Activated T-helper 2 cell treated with anti-CD3 and anti-CD28 coated beads, Interferon-gamma antibody, Interleukin-2, Interleukin-4, amounts not matched to agents 10 μg/mL and 5 μg/mL and 100 μg/mL, durations not matched to agents 14 hours and 24 hours and 36 hours (primary cell): ENCODE measurements at regions of chr17 and their contacts with region 1.

Region 1: DNA sequence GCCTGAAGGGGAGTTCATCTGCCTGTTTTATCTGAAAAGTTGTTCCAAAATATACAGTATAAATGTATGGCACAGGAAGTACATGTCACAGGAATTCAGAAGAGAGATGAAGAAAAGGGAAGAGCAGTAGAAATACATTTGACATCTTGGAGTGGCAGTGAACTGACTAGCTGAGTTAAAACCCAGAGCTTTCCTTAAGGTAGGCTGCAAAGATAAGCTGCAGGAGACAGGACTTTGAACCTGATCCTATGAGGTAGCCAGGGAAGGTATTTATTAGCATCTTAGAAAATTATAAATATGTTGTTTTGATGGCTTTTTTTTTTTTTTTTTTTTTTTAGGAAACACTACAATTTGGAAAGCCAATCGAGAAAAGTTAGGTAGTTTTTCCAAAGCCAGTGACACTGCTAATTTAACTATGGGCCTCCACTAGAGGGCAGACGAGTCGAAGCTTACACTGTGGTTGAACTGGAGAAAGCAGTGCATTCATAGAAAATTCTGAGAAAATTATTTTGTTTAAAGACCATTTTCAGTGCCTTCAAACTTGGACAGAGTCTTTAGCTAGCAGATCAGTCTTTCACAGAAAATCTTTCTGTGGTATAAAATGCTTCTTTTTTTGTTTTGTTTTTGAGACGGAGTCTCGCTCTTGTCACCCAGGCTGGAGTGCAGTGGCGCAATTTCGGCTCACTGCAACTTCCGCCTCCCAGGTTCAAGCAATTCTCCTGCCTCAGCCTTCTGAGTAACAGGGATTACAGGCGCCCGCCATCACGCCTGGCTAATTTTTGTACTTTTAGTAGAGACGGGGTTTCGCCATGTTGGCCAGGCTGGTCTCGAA is 122.3 kb downstream of the SSH2 start:
- DNase-seq: peak; percentile 46
- H3K4me3 Mint-ChIP-seq: no peak overlapping the region
- H3K27ac Mint-ChIP-seq: no peak overlapping the region
- H3K4me1 Mint-ChIP-seq: peaks cover 14% of the 10 kb centered on the region
- H3K27me3 Mint-ChIP-seq: no peaks in the 10 kb centered on the region

Region 2: DNA sequence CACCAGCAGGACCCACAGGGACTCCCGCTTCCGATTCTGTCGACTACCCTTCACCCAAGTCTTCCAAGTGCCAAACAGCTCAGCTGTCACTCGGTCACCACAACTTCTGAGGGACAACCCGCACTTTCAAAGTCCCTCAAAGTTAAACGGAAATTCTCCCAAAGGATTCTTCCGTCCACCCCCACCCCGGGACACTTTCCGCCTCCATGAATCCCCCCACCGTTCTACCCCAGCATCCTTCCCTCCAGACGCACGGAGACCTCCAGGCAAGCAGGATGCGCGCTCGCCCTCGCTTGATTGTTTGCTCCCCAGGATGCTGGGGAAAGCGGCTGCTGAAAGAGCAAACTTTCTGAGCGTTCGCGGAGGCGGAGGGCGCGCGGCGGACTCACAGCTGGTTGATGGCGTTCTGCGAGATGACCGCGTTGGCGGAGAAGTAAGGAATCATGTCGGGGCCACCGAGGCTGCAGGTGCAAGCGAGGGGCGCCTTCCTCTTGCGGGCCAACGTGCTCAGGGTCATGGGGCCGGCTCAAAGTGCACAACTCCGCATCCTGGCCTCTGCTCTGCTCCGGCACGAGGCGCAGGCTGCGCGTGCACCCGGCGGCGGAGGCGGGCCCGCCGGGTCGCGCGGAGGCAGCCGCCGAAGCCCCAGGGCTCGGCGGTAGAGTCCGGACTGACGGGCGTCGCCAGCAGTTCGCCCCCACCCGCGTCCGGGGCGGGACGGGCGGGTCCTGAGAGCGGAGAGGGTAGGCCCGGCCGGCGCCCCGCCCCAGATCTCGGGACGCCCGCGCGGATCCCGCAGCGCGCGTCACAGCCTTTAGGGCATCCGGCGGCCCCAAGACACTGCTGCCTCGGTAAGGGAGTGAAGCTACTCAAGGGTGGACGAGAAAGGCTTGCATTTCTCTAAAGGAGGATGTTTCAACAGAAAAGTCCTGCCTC is 46.7 kb before region 1 on chr17:
- intact Hi-C with region 1: no loop called
- DNase-seq: peak; percentile 90
- H3K4me3 Mint-ChIP-seq: peak overlapping the region; percentile 97
- H3K27ac Mint-ChIP-seq: peak overlapping the region; percentile 96
- H3K4me1 Mint-ChIP-seq: peaks cover 27% of the 10 kb centered on the region
- H3K27me3 Mint-ChIP-seq: no peaks in the 10 kb centered on the region

Region 3: DNA sequence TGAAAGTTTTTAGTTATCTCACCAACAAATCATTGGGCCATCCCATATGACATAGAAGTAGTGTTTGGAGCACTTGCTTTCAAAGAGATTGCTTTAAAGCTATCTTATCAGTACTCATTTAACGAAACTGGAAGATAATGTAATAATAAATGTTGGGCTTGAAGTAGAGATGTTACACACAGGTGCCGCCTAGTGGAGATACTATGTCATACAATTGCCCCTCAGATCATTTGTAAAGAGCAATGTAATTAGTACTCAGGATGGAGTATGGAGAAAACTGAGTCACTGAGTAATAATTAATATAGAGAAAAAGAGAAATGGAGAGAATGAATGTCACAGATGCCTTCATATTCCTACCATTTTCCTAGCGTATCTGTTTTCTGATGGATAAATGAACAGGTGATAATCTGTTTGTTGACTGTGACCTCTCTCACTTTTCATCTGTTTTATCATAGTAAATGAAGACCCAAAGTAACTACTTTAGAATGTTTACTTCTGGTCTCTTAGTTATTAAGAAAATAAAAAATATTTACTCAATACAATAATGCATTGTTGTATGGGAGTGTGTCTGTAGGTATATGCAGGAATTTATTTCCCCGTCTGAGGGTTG is 214.1 kb after region 1 on chr17:
- intact Hi-C with region 1: loop called (anchors 1 kb)
- DNase-seq: no peak
- H3K4me3 Mint-ChIP-seq: no peak overlapping the region
- H3K27ac Mint-ChIP-seq: no peak overlapping the region
- H3K4me1 Mint-ChIP-seq: no peaks in the 10 kb centered on the region
- H3K27me3 Mint-ChIP-seq: peaks cover 6% of the 10 kb centered on the region

Region 4: GRCh38 chr17:30093463-30094147 is 285.9 kb after region 1 on chr17:
- intact Hi-C with region 1: loop called (anchors 5 kb)
- DNase-seq: peak; percentile 20
- H3K4me3 Mint-ChIP-seq: no peak overlapping the region
- H3K27ac Mint-ChIP-seq: no peak overlapping the region
- H3K4me1 Mint-ChIP-seq: peaks cover 7% of the 10 kb centered on the region
- H3K27me3 Mint-ChIP-seq: peaks cover 45% of the 10 kb centered on the region